Heart left ventricle (tissue), 16 donors: ENCODE measurements at regions of chr16 and their contacts with region 1.

Region 1: DNA sequence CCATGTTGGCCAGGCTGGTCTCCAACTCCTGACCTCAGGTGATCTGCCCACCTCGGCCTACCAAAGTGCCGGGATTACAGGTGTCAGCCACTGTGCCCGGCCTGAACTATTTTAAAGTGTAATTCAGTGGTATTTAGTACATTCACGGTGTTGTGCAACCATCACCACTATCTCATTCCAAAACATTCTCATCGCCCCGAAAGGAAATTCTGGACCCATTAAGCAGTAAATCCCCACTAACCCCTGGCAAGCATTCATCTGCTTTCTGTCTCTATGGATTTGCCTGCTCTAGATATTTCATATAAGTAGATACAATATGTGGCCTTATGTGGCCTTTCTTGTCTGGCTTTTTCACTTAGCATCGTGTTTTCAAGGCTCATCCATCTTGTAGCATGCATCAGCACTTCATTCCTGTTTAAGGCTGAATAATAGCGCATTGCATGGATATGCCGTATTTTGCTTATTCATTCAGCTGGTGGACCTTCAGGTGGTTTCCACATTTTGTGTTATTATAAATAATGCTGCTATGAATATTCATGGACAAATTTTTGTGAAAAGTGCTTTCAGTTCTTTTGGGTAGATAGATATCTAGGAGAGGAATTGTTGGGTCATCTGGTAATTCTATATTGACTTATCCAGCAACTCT is 8.4 kb upstream of the HERPUD1 start:
- DNase-seq: no peak
- ATAC-seq: no peak
- H3K4me3 ChIP-seq: no peak overlapping the region
- H3K27ac ChIP-seq: no peak overlapping the region
- H3K4me1 ChIP-seq: no peaks in the 10 kb centered on the region
- H3K27me3 ChIP-seq: no peaks in the 10 kb centered on the region
- CTCF ChIP-seq: no peak
- POLR2A ChIP-seq: no peak

Region 2: GRCh38 chr16:56869513-56870275 is 53.9 kb before region 1 on chr16:
- intact Hi-C with region 1: no loop called
- DNase-seq: no peak
- ATAC-seq: no peak
- H3K4me3 ChIP-seq: no peak overlapping the region
- H3K27ac ChIP-seq: no peak overlapping the region
- H3K4me1 ChIP-seq: peaks cover 0 to 22% (median 5%) of the 10 kb centered on the region in 12 donors
- H3K27me3 ChIP-seq: no peaks in the 10 kb centered on the region
- CTCF ChIP-seq: no peak
- POLR2A ChIP-seq: no peak

Region 3: GRCh38 chr16:56903866-56904265 is 19.7 kb before region 1 on chr16:
- intact Hi-C with region 1: loop called in 1 of 10 experiments (anchors 2 kb)
- DNase-seq: no peak
- ATAC-seq: no peak
- H3K4me3 ChIP-seq: no peak overlapping the region
- H3K27ac ChIP-seq: no peak overlapping the region
- H3K4me1 ChIP-seq: no peaks in the 10 kb centered on the region
- H3K27me3 ChIP-seq: no peaks in the 10 kb centered on the region
- CTCF ChIP-seq: no peak
- POLR2A ChIP-seq: no peak

Region 4: GRCh38 chr16:56950881-56951771 is 27.6 kb after region 1 on chr16:
- intact Hi-C with region 1: no loop called
- DNase-seq: peak in 3 of 5 donors; percentile 38 to 74 (median 46)
- ATAC-seq: peak; percentile 72 to 79 (median 78)
- H3K4me3 ChIP-seq: no peak overlapping the region
- H3K27ac ChIP-seq: no peak overlapping the region
- H3K4me1 ChIP-seq: peaks cover 0 to 9% (median 0%) of the 10 kb centered on the region in 12 donors
- H3K27me3 ChIP-seq: no peaks in the 10 kb centered on the region
- CTCF ChIP-seq: peak; percentile 41 to 67 (median 48)
- POLR2A ChIP-seq: no peak

Region 5: GRCh38 chr16:57023541-57024249 is 100.1 kb after region 1 on chr16:
- intact Hi-C with region 1: no loop called
- DNase-seq: no peak
- ATAC-seq: no peak
- H3K4me3 ChIP-seq: no peak overlapping the region
- H3K27ac ChIP-seq: peak overlapping the region in 1 of 12 donors; percentile 37
- H3K4me1 ChIP-seq: peaks cover 0 to 28% (median 0%) of the 10 kb centered on the region in 12 donors
- H3K27me3 ChIP-seq: no peaks in the 10 kb centered on the region
- CTCF ChIP-seq: no peak
- POLR2A ChIP-seq: no peak